B cell (primary cell): ENCODE measurements at regions of chr22 and their contacts with region 1.

Region 1: DNA sequence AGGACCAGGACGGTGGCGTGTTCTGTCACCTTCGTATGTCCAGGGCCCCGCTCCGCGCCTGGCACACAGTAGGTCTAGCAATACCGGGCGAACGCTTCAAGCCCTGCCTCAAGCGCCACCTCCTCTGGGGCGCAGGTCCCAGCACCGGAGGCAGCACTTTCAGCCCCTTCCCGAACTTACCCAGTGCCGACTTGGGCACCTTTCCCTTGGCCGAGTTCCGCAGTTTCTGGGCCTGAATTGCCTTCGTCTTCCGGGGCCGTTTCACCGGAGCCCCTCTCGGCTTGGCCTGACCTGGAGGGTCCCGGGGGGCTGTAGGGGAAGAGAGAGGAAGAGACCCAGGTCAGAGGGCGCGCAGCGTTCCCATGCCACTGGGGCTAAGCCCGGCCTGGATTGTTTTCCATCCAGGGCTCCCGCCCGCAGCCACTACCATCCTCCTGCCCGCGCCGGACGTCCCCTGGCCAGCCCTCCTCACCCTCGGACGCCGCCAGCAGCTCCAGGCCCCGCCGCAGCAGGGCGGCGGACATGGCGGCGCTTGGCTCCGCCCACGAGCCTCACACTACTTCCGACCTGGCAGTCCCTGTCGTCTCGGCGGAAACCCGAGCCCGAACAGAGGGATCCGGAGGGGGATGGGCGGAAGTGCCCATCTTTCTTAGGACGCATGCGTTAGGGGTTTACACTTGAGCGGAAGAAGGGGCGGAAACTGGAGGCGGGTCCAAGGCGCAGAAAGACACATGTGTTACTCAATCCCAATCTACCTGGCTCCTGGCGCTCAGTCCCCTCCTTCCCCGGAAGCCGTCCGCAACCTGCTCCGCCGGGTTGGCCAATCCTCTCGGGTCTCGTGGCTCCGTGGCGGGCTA is at the start of gene RPS19BP1:
- DNase-seq: peak; percentile 100
- ATAC-seq: peak; percentile 83
- H3K4me3 ChIP-seq: peak within 1 kb of the TSS; percentile 70 to 96 (median 89)
- H3K4me3 Mint-ChIP-seq: peak within 1 kb of the TSS; percentile 91
- H3K27ac ChIP-seq: peak within 1 kb of the TSS; percentile 56 to 94
- H3K27ac Mint-ChIP-seq: peak within 1 kb of the TSS; percentile 94
- H3K4me1 ChIP-seq: peaks cover 45 to 58% of the 10 kb centered on the region in 2 donors
- H3K4me1 Mint-ChIP-seq: peaks cover 54% of the 10 kb centered on the region
- H3K27me3 ChIP-seq: peaks cover 0 to 5% (median 0%) of the 10 kb centered on the region in 4 experiments
- H3K27me3 Mint-ChIP-seq: no peaks in the 10 kb centered on the region
- CTCF ChIP-seq: no peak
- total RNA-seq, gene RPS19BP1: 59.1 and 60.3 TPM in 2 replicates

Region 2: GRCh38 chr22:39170825-39171622 is 361.4 kb before region 1 on chr22:
- CTCF ChIA-PET with region 1: interaction called, 45 read pairs
- POLR2A ChIA-PET with region 1: interaction called, 3 read pairs
- intact Hi-C with region 1: loop called (anchors 1 kb)
- DNase-seq: peak; percentile 91
- ATAC-seq: peak; percentile 82
- H3K4me3 ChIP-seq: peak overlapping the region in 4 of 5 experiments; percentile 30 to 50 (median 46)
- H3K4me3 Mint-ChIP-seq: peak overlapping the region; percentile 88
- H3K27ac ChIP-seq: peak overlapping the region; percentile 44 to 81
- H3K27ac Mint-ChIP-seq: peak overlapping the region; percentile 92
- H3K4me1 ChIP-seq: peaks cover 32 to 45% of the 10 kb centered on the region in 2 donors
- H3K4me1 Mint-ChIP-seq: peaks cover 40% of the 10 kb centered on the region
- H3K27me3 ChIP-seq: no peaks in the 10 kb centered on the region
- H3K27me3 Mint-ChIP-seq: peaks cover 3% of the 10 kb centered on the region
- CTCF ChIP-seq: peak; percentile 99

Region 3: GRCh38 chr22:39395936-39396796 is 136.3 kb before region 1 on chr22:
- CTCF ChIA-PET with region 1: interaction called, 26 read pairs
- POLR2A ChIA-PET with region 1: interaction called, 11 read pairs
- intact Hi-C with region 1: loop called (anchors 2 kb)
- DNase-seq: no peak
- ATAC-seq: no peak
- H3K4me3 ChIP-seq: no peak overlapping the region
- H3K4me3 Mint-ChIP-seq: no peak overlapping the region
- H3K27ac ChIP-seq: no peak overlapping the region
- H3K27ac Mint-ChIP-seq: no peak overlapping the region
- H3K4me1 ChIP-seq: peaks cover 9 to 16% of the 10 kb centered on the region in 2 donors
- H3K4me1 Mint-ChIP-seq: peaks cover 15% of the 10 kb centered on the region
- H3K27me3 ChIP-seq: no peaks in the 10 kb centered on the region
- H3K27me3 Mint-ChIP-seq: no peaks in the 10 kb centered on the region
- CTCF ChIP-seq: no peak

Region 4: DNA sequence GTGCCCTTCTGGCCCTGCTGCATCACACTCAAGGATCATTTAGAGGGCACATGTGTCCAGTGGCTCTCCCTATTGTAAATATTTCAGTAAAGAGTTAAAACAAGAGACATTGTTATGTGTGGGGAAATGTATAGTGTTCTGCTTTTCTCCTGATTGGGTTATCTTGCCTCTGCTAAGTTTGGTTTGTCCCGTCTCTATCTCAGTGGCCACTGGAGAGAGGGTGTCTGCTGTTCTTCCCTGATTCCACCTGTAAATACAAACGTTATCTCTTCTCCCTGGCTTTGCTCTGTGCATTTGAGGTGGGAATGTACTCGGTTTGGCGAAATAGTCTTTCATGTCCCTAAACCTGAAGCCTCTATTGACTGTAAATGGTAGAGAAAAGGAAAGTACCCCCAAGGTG is 24.1 kb before region 1 on chr22:
- CTCF ChIA-PET with region 1: interaction called, 85 read pairs
- POLR2A ChIA-PET with region 1: no interaction called
- intact Hi-C with region 1: no loop called
- DNase-seq: no peak
- ATAC-seq: no peak
- H3K4me3 ChIP-seq: no peak overlapping the region
- H3K4me3 Mint-ChIP-seq: no peak overlapping the region
- H3K27ac ChIP-seq: no peak overlapping the region
- H3K27ac Mint-ChIP-seq: no peak overlapping the region
- H3K4me1 ChIP-seq: peaks cover 6 to 12% of the 10 kb centered on the region in 2 donors
- H3K4me1 Mint-ChIP-seq: peaks cover 34% of the 10 kb centered on the region
- H3K27me3 ChIP-seq: no peaks in the 10 kb centered on the region
- H3K27me3 Mint-ChIP-seq: no peaks in the 10 kb centered on the region
- CTCF ChIP-seq: no peak

Region 5: DNA sequence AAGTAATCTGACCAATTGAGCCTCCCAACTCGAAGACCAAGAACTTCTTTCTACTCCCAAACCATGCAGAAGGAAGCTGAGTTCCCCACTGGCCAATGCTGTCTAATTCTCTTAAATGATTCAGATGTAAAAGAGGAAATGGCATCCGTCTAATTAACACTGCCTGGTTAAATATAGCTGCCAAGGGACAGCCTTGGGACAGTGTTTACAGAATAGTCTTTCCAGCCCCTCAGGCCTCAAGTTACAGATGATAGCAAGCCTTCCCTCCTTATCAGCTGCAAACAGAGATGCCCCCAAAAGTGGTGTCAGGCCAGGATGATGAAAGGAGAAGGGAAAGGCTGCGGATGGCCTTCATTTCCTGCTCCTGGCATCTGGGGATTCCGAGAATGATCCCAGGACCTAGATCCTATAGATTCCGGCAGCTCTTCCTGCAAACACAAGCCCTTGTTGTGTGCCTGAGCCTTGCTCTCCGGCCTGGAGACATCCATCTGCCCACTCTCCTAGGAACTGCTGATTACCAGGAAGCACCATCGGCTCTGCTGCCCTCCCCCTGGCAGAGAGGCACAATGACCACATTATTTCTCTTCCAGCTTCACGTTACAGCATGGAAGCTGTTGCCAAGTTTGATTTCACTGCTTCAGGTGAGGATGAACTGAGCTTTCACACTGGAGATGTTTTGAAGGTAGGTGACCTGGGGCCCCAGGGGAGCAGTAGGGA is 414.2 kb after region 1 on chr22:
- CTCF ChIA-PET with region 1: interaction called, 10 read pairs
- POLR2A ChIA-PET with region 1: no interaction called
- intact Hi-C with region 1: loop called (anchors 2 kb)
- DNase-seq: peak; percentile 60
- ATAC-seq: no peak
- H3K4me3 ChIP-seq: peak overlapping the region in 2 of 5 experiments; percentile 1 to 17
- H3K4me3 Mint-ChIP-seq: peak overlapping the region; percentile 76
- H3K27ac ChIP-seq: peak overlapping the region; percentile 23 to 40
- H3K27ac Mint-ChIP-seq: peak overlapping the region; percentile 57
- H3K4me1 ChIP-seq: peaks cover 73 to 76% of the 10 kb centered on the region in 2 donors
- H3K4me1 Mint-ChIP-seq: peaks cover 70% of the 10 kb centered on the region
- H3K27me3 ChIP-seq: no peaks in the 10 kb centered on the region
- H3K27me3 Mint-ChIP-seq: no peaks in the 10 kb centered on the region
- CTCF ChIP-seq: no peak

Region 6: DNA sequence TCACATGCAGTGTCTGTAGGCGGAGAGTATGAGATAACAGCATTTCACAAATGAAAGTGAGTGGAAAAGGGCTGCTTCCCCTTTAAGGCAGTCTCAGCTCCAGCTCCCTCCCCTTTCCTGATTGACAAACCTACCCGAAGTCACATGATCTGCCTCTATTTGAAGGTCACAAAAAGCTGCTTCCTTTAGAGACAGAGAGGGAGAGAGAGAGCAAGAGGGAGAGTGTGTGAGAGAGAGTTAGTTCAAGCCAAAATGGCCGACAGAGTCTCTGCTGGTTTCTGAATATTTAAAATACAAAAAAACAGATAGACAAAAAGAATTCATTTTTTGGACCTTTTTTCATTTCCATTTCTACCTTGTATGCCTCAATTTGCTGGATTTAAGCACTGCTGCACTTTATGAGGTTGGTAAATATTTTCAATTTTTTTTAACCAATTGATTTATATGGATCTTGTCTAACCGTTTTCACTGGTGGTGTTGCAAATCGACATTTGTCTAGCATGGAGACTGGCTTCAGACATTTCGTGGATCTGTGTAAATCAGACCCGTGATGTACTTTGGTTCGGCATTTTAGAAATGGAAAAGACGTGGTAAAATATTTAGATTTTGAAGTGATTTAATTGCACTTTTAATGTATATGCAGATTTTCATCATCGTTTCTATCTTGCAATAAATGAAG is 645.4 kb after region 1 on chr22 and contains the start of gene TNRC6B:
- CTCF ChIA-PET with region 1: no interaction called
- POLR2A ChIA-PET with region 1: no interaction called
- intact Hi-C with region 1: loop called (anchors 5 kb)
- DNase-seq: peak; percentile 93
- ATAC-seq: peak; percentile 90
- H3K4me3 ChIP-seq: peak within 1 kb of the TSS; percentile 56 to 100 (median 72)
- H3K4me3 Mint-ChIP-seq: peak within 1 kb of the TSS; percentile 84
- H3K27ac ChIP-seq: peak within 1 kb of the TSS; percentile 65 to 79
- H3K27ac Mint-ChIP-seq: peak within 1 kb of the TSS; percentile 84
- H3K4me1 ChIP-seq: peaks cover 41 to 42% of the 10 kb centered on the region in 2 donors
- H3K4me1 Mint-ChIP-seq: peaks cover 61% of the 10 kb centered on the region
- H3K27me3 ChIP-seq: no peaks in the 10 kb centered on the region
- H3K27me3 Mint-ChIP-seq: no peaks in the 10 kb centered on the region
- CTCF ChIP-seq: no peak
- total RNA-seq, gene TNRC6B: 210 and 248 TPM in 2 replicates